Head of caudate nucleus (tissue), 42 donors: ENCODE measurements at regions of chr7 and their contacts with region 1.

Region 1: DNA sequence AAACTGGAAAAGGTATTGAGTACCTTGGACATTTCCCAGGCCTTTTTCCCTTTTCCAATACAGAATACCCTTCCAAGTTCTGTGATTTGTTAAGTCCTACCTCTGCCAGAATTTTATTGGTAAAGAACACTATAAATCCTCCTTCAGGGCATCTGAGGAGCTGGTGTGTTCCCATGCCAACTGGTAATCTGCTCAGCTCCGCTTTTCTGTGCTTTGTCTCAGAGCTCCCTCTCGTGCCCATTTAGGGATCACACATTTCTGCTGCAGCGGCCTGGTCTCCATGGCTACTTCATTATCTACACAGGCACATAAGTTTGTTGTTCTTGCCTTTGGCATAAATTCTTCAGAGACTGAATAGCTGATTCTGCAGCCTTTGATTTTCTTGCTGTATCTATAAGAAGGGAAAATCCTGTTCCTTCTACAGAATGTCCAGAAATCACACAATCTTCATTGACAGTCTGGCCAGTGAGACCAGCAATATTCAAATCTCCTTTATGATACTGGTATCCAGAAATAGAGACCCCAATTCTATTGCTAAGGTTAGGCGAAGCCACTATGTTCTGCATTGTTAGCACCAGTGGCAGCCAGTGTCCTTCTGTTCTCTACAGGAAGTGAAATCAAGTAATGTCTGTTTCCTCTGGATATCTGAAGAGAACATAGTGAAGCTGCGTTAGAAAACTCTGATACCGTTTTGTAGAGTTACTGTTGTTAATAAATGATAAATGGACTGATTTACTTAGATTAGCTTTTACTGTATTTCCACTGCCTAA is 51.9 kb downstream of the DENND11 start:
- DNase-seq: peak; percentile 44 to 92 (median 78)

Region 2: GRCh38 chr7:141072548-141073172 is 577.4 kb before region 1 on chr7:
- intact Hi-C with region 1: loop called (anchors 10 kb)
- DNase-seq: peak; percentile 69 to 95 (median 84)

Region 3: GRCh38 chr7:141551094-141551781 is 98.8 kb before region 1 on chr7 and contains the start of gene AGK:
- intact Hi-C with region 1: loop called (anchors 10 kb)
- DNase-seq: peak; percentile 48 to 91 (median 80)

Region 4: DNA sequence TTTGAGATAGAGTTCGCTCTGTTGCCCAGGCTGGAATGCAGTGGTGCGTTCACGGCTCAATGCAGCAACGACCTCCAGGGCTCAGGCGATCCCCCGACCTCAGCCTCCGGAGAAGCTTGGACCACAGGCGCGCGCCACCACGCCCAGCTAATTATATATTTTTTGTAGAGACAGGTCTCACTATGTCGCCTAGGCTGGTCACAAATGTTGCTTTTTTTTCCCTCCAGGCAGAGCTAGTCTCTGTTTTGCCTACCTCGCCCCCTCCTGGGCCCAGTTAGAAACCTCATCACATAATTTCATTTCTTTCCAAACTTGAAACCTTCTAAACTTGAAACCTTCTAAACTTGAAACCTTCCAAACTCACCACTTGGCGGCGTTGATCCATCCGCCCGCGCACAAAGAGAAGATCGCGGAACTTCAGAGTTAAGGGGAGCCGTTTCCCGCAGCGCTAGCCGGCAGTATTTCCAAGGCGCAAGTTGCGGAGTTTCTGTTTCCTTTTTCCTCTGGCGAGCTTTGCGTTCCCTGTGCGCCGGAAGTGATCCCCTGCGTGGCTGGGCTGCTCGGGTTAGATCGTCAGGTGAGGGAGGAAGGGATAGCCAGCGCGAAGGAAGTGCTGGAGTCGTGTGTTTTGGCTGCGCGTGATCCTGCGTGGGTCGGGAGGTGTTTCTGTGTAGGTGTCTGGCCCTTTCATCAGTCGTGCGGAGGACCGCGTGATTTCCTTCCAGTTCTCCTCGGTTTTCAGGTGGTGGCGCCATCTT is 88.0 kb after region 1 on chr7 and contains the start of gene SSBP1:
- intact Hi-C with region 1: loop called (anchors 2 kb)
- DNase-seq: peak; percentile 82 to 97 (median 92)